ENCODE measurements at regions of chr2 and their contacts with region 1.

Region 1: DNA sequence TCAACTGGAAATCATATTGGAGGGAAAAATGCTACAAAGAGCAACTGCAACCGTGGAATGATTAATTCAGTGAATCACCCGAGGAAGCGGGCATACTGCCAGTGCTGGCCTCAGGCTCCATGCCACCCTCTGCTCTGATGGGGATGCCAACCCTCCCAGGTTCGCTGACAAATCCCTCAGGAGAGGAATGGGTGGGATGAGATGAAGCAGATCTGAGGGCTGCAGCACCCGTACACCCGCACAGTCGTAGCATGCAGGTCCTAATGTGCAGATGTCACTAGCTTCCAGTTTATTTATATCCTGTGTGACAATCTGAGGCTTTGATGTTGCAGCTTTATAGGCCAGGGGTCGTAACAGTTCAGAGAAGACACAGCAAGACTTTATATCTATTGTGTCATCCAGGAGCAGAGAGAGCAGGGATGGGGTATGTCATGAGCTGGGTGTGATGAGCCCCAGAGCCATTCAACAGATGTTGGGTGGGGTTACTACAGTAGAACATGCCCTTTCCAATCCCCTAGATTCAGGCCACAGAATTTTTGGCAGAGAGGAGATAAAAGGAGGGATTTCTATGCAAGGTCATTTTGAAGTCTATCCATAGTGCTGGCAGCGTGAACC is 44.6 kb downstream of the DPP4 start:
- DNase-seq: peak; percentile 43
- ATAC-seq: no peak
- H3K4me3 ChIP-seq: no peak overlapping the region
- H3K27ac ChIP-seq: no peak overlapping the region
- H3K4me1 ChIP-seq: peaks cover 33% of the 10 kb centered on the region
- H3K27me3 ChIP-seq: no peaks in the 10 kb centered on the region
- CTCF ChIP-seq: no peak
- EP300 ChIP-seq: no peak
- POLR2A ChIP-seq: no peak
- RAD21 ChIP-seq: no peak

Region 2: DNA sequence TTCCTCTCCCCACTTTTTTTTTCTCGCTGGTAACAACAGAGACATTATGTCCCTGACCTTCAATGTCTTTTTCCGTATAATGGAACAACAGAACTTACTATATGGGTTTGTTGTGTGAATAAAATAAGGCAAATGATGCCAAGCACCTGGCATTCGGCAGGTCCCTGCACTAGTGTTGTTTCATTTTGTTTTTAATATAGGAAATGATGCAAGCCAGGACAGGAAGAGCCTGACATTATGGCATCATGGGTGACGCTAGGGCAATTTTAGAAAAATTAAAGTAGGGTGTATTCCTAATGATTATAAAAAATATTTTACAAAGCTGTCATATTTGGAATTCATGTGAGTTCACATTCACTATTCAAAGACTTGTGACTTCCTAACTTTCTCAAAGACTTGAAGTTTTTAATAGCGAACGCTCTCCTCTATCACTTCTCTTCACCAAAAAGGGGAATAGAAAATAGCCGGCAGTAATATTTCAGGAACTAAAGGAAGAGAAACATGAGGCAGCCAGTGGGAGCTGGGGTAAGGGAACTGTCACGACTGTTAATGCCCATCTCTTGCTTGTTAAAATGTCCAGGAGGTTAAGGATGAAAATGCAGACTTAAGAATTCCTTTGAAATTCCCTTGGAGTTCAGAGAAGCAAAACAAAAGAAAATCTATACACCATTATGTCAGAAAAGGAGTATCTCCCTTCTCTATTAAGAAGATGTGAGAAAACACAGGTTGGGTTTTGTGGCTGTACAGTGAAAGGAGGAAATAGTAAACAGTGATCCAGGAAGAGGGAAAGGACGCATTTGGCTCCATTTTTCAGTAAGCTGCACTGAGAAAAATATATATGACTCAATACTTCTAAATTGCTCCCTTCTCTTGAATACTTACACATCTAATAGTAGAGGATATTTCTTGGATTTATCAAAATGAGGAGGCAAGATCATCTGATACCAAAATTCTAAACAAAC is 15.6 kb before region 1 on chr2:
- CTCF ChIA-PET with region 1: no interaction called
- POLR2A ChIA-PET with region 1: no interaction called
- in situ Hi-C with region 1: no loop called
- intact Hi-C with region 1: loop called (anchors 1 kb)
- DNase-seq: no peak
- ATAC-seq: no peak
- H3K4me3 ChIP-seq: no peak overlapping the region
- H3K27ac ChIP-seq: no peak overlapping the region
- H3K4me1 ChIP-seq: peaks cover 28% of the 10 kb centered on the region
- H3K27me3 ChIP-seq: no peaks in the 10 kb centered on the region
- CTCF ChIP-seq: no peak
- EP300 ChIP-seq: no peak
- POLR2A ChIP-seq: no peak
- RAD21 ChIP-seq: no peak

Region 3: GRCh38 chr2:162085090-162085891 is 55.9 kb after region 1 on chr2:
- CTCF ChIA-PET with region 1: no interaction called
- POLR2A ChIA-PET with region 1: no interaction called
- in situ Hi-C with region 1: no loop called
- intact Hi-C with region 1: loop called (anchors 1 kb)
- DNase-seq: peak; percentile 85
- ATAC-seq: peak; percentile 80
- H3K4me3 ChIP-seq: no peak overlapping the region
- H3K27ac ChIP-seq: peak overlapping the region; percentile 27
- H3K4me1 ChIP-seq: peaks cover 49% of the 10 kb centered on the region
- H3K27me3 ChIP-seq: no peaks in the 10 kb centered on the region
- CTCF ChIP-seq: no peak
- EP300 ChIP-seq: peak in 1 of 2 experiments; percentile 86; a peak in 2 of 4 replicates
- POLR2A ChIP-seq: no peak
- RAD21 ChIP-seq: no peak

Region 4: DNA sequence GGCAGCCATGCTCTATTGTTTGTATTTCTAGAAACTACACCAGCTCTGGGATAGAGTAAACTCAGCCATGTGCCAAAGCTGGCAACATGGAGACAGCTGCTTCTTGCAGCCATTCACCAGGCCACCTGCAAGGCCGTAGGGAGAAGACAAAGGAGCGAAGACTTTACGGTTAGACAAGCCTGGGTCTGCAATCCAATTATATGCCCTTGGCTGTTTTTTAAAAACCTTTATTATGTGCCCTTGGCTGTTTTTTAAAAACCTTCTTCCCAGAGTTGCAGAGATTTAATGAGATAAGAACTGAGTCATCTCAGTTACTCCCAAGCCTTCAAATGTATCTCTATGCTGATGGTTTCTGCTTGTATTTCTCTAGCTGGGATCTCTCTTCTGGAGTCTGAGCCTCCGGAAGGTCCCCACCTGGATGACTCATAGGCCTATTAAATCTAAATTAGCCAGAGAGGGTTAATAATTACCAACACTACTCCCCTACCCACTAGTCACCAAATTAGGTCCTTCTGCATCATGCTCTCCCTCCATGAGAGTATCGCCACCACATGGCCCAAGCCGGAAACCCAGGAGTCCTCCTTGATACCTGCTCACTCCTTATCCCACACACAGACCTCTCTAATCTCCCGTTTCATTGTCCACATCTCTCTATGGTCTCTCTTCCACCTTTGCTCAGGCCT is 62.1 kb after region 1 on chr2:
- CTCF ChIA-PET with region 1: no interaction called
- POLR2A ChIA-PET with region 1: no interaction called
- in situ Hi-C with region 1: no loop called
- intact Hi-C with region 1: loop called (anchors 1 kb)
- DNase-seq: peak; percentile 81
- ATAC-seq: peak; percentile 87
- H3K4me3 ChIP-seq: no peak overlapping the region
- H3K27ac ChIP-seq: no peak overlapping the region
- H3K4me1 ChIP-seq: peaks cover 52% of the 10 kb centered on the region
- H3K27me3 ChIP-seq: no peaks in the 10 kb centered on the region
- CTCF ChIP-seq: peak; percentile 70
- EP300 ChIP-seq: peak in 1 of 2 experiments; percentile 34; a peak in 1 of 4 replicates
- POLR2A ChIP-seq: no peak
- RAD21 ChIP-seq: peak; percentile 42; the same call in 1 of the 2 replicates

Region 5: DNA sequence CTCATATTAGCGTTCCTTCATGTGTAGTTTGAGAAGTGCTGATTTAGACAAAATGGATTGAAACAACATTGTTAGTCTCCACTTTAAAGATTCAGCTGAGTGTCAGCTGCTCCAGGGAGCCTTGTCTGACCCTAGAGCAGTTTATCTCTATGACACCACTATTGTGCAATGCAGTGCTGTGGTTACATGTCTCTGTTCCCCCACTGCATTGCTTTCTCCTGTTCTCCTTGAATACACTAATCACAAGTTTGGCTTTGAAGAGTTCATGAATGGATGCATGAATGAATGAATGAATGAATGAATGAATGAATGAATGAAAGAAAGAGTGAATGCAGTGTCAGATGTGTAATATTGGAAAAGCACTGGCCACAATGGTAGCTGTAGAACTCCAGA is 84.4 kb after region 1 on chr2:
- CTCF ChIA-PET with region 1: no interaction called
- POLR2A ChIA-PET with region 1: interaction called, 4 read pairs
- in situ Hi-C with region 1: no loop called
- intact Hi-C with region 1: loop called (anchors 2 kb)
- DNase-seq: peak; percentile 85
- ATAC-seq: peak; percentile 84
- H3K4me3 ChIP-seq: peak overlapping the region in 1 of 3 experiments; percentile 34; a peak in 2 of 6 replicates
- H3K27ac ChIP-seq: peak overlapping the region; percentile 73
- H3K4me1 ChIP-seq: peaks cover 70% of the 10 kb centered on the region
- H3K27me3 ChIP-seq: no peaks in the 10 kb centered on the region
- CTCF ChIP-seq: no peak
- EP300 ChIP-seq: peak; percentile 82 to 92; a peak in 3 of 4 replicates
- POLR2A ChIP-seq: no peak
- RAD21 ChIP-seq: no peak

Region 6: DNA sequence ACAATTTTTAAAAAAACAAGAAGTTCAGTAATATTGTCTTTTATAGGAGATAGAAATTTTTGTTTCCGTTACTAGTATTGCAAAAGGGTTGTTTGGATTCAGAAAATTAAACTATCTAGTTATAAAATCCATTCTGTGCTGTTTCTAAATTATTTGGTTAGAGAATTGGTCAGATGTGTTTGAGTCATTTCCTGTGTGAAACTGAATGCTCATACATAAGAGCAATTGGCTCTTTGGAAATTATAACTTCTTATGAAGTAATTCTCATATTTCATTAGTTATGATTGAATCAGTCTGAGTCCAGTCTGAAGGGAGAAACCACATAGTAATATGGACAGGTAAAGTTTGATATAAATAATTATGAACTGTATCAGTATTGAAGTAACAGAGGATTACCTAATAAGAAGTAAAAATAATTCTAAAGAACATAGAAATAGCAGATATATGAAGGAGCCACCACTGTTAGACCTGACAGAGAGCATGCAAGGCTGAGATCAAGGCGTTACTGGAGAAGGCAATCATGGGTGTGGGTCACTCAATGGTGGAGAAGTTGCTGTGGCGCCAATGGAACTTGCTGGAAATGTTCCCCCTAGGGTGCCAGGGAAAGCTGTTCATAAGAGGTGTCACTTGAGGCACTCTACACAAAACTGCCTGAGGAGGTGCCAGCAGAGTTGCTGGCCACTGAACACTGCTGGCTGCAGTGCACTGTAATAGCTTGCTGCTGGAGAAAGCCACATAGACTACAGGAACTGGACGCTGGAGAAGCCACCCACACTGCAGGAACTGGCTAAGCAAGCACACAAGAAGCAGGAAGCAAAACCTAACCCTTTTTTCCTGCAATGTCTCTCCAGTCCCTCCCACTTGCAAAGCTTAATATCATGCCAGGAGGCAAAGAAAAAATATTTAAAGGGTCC is 231.9 kb after region 1 on chr2:
- CTCF ChIA-PET with region 1: no interaction called
- POLR2A ChIA-PET with region 1: no interaction called
- in situ Hi-C with region 1: no loop called
- intact Hi-C with region 1: no loop called
- DNase-seq: no peak
- ATAC-seq: peak; percentile 71
- H3K4me3 ChIP-seq: no peak overlapping the region
- H3K27ac ChIP-seq: no peak overlapping the region
- H3K4me1 ChIP-seq: no peaks in the 10 kb centered on the region
- H3K27me3 ChIP-seq: no peaks in the 10 kb centered on the region
- CTCF ChIP-seq: no peak
- EP300 ChIP-seq: no peak
- POLR2A ChIP-seq: no peak
- RAD21 ChIP-seq: no peak

Region 7: GRCh38 chr2:162613839-162614238 is 584.4 kb after region 1 on chr2:
- CTCF ChIA-PET with region 1: no interaction called
- POLR2A ChIA-PET with region 1: no interaction called
- in situ Hi-C with region 1: no loop called
- intact Hi-C with region 1: no loop called
- DNase-seq: no peak
- ATAC-seq: no peak; the same call in 2 of the 3 replicates
- H3K4me3 ChIP-seq: no peak overlapping the region
- H3K27ac ChIP-seq: no peak overlapping the region
- H3K4me1 ChIP-seq: peaks cover 10% of the 10 kb centered on the region
- H3K27me3 ChIP-seq: no peaks in the 10 kb centered on the region
- CTCF ChIP-seq: no peak
- EP300 ChIP-seq: peak in 1 of 2 experiments; percentile 60; a peak in 1 of 4 replicates
- POLR2A ChIP-seq: no peak
- RAD21 ChIP-seq: no peak